ENCODE measurements at regions of chr5 and their contacts with region 1.

Region 1: GRCh38 chr5:181207214-181208107 is 2.5 kb upstream of the TRIM7 start:
- DNase-seq: peak; percentile 67

Region 2: GRCh38 chr5:181100121-181101015 is 107.1 kb before region 1 on chr5:
- CTCF ChIA-PET with region 1: no interaction called
- POLR2A ChIA-PET with region 1: no interaction called
- DNase-seq: no peak

Region 3: DNA sequence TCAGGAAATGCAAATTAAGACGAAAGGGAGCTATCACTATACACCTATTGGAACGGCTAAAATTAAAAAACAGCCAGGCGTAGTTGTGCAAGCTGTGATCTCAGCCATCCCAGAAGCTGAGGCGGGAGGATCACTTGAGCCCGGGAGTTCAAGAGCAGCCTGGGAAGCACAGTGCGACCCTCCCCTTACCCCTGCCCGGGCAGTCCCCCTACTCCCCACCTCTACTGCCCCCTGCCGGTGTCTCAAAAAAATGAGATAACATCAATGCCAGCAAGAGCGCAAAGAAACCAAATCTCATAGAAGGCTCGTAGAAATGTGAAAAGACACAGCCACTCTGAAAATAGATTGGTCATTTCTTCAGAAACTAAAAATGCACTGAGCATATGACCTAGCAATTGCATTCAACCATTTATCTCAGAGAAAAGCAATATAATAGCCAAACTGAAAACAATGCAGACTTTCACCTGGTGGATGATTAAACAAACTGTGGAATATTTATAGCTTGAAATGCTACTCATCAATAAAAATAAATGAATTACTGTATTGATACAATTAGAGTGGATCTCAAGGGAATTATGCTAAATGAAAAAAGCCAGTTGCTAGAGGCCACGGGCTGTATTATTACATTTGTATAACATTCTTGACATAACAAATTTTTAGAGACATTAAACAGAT is 39.5 kb before region 1 on chr5:
- CTCF ChIA-PET with region 1: interaction called, 11 read pairs
- POLR2A ChIA-PET with region 1: interaction called, 14 read pairs
- DNase-seq: peak; percentile 70

Region 4: DNA sequence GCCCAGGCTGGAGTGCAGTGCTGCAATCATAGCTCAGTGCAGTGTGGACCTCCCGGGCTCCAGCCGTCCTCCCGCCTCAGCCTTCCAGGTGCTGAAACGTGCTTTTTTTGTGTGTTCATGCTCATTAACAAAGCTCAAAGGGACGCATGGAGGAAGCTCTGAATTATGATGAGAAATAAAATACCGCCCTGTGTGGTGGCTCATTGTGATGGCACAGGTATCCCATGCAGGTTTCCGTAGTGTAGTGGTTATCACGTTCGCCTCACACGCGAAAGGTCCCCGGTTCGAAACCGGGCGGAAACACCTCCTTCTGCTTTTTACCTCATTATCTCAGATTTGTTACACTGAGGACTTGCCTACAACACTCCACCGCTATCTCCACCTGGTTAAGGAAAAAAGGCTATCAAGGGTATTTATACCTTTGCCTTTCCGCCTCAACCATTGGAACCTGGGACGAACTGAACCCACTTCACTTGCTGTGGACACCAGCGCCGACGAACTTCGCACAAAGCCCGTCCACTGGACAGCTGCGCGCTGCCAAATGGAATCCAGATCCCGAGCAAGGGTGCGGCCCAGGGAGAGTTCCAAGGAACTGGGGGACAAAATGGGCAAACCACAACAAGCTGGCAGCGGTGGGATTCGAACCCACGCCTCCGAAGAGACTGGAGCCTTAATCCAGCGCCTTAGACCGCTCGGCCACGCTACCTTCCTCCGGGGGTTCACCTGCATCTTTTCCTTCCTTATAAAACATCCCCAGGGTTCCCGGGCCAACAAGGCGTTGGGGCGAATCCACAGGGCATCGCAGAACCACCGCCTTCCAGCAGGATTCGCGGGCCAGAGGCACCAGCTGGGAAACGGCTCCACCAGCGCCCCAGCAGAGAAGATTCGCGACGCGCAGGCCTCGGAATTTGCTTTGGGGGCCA is 33.8 kb before region 1 on chr5:
- CTCF ChIA-PET with region 1: interaction called, 11 read pairs
- POLR2A ChIA-PET with region 1: interaction called, 14 read pairs
- DNase-seq: peak; percentile 62

Region 5: GRCh38 chr5:181232593-181232992 is 25.1 kb after region 1 on chr5:
- CTCF ChIA-PET with region 1: no interaction called
- POLR2A ChIA-PET with region 1: no interaction called
- DNase-seq: no peak

Region 6: GRCh38 chr5:181243512-181244343 is 36.3 kb after region 1 on chr5 and contains the start of gene RACK1:
- CTCF ChIA-PET with region 1: no interaction called
- POLR2A ChIA-PET with region 1: interaction called, 22 read pairs
- DNase-seq: peak; percentile 87

Measured in HEK293T (cell line).